CD4-positive, alpha-beta T cell (primary cell): ENCODE measurements at regions of chr15 and their contacts with region 1.

Region 1: DNA sequence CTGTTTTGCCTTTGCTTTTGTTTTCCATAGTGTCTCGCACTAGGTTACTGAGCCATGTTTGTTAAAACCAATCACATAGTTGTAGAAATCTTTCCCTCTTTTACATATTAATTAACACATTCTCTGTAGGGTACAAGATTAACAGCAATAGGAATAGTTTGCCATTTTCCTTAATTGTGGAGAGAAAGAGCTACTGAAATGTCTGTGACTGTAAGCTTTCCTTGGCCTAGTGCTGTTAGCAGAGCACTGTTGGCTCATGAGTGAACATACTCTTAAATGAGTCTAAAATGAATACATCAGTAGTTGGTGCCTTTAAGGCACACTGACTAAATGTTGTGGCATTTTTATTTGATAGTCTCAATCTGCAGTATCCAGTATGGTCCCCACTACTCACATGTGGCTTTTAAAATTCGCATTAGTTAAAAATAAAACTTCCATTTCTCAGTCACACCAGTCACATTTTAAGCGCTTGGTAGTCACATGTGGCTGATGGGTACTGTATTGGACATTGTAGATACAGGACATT is 28.2 kb downstream of the CHD2 start:
- DNase-seq: no peak
- ATAC-seq: no peak
- H3K4me3 ChIP-seq: no peak overlapping the region
- H3K4me3 Mint-ChIP-seq: no peak overlapping the region
- H3K27ac ChIP-seq: no peak overlapping the region
- H3K27ac Mint-ChIP-seq: peak overlapping the region; percentile 57
- H3K4me1 ChIP-seq: peaks cover 21% of the 10 kb centered on the region
- H3K4me1 Mint-ChIP-seq: peaks cover 79% of the 10 kb centered on the region
- H3K27me3 ChIP-seq: no peaks in the 10 kb centered on the region
- H3K27me3 Mint-ChIP-seq: no peaks in the 10 kb centered on the region
- CTCF ChIP-seq: no peak

Region 2: DNA sequence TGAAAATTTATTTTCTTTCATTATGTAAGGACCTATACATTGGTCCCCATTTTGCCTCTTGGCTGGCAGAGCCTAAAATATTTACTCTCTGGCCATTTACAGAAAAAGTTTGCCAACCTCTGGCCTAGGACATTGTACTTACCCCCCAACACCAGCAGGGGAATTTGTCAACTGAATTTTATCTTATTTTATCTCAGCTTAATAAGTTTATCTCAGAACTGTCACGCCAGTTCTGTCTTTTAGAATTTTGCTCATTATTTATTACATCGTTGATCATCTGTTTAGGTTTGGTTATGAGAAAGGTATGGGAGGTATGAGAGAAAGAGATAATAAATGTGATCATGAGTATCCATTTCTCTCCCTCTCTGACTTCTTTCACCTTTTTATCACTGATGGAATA is 10.1 kb after region 1 on chr15:
- CTCF ChIA-PET with region 1: interaction called, 13 read pairs
- POLR2A ChIA-PET with region 1: interaction called, 4 read pairs
- intact Hi-C with region 1: no loop called
- DNase-seq: no peak
- ATAC-seq: no peak
- H3K4me3 ChIP-seq: no peak overlapping the region
- H3K4me3 Mint-ChIP-seq: no peak overlapping the region
- H3K27ac ChIP-seq: no peak overlapping the region
- H3K27ac Mint-ChIP-seq: no peak overlapping the region
- H3K4me1 ChIP-seq: peaks cover 18% of the 10 kb centered on the region
- H3K4me1 Mint-ChIP-seq: peaks cover 58% of the 10 kb centered on the region
- H3K27me3 ChIP-seq: no peaks in the 10 kb centered on the region
- H3K27me3 Mint-ChIP-seq: no peaks in the 10 kb centered on the region
- CTCF ChIP-seq: no peak

Region 3: DNA sequence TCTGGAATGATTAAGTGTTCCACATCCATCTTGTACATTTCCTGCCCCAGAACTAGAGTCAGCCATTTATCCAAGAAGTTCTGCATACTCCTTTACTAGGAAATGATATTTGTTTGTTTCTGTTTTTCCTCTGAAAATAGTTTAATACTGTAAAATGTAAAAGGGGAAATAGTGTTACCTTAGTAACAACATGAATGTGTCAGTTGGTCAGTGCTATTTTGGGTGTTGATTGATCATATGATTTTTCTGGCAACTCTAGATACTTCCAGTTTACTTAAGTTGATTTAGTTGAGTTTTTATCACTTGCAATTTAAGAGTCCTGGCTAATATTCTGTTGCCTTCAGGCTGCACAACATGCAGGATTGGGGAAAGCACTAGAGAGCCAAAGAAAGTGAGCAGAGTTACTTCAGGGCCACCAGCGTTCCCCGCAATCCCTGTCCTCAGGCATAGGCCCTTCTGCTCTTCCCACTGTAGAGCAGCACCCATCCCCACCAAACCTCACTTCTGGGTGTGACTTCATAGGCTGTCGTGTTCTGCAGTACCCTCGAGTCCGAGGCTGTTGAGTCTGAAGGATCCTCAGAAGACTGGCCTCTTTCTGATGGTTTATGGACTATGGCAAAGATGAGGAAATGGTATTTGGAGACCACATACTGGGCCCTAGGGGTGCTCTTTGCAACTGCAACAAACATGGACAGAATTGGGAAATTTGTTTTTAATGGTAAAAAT is 40.8 kb after region 1 on chr15:
- CTCF ChIA-PET with region 1: no interaction called
- POLR2A ChIA-PET with region 1: interaction called, 5 read pairs
- intact Hi-C with region 1: loop called in 1 of 2 experiments (anchors 5 kb)
- DNase-seq: peak in 2 of 14 experiments; percentile 23 to 26
- ATAC-seq: peak; percentile 41
- H3K4me3 ChIP-seq: no peak overlapping the region
- H3K4me3 Mint-ChIP-seq: no peak overlapping the region
- H3K27ac ChIP-seq: no peak overlapping the region
- H3K27ac Mint-ChIP-seq: peak overlapping the region; percentile 37
- H3K4me1 ChIP-seq: peaks cover 3% of the 10 kb centered on the region
- H3K4me1 Mint-ChIP-seq: peaks cover 53% of the 10 kb centered on the region
- H3K27me3 ChIP-seq: no peaks in the 10 kb centered on the region
- H3K27me3 Mint-ChIP-seq: no peaks in the 10 kb centered on the region
- CTCF ChIP-seq: no peak